ENCODE measurements at regions of chr2 and their contacts with region 1.

Region 1: DNA sequence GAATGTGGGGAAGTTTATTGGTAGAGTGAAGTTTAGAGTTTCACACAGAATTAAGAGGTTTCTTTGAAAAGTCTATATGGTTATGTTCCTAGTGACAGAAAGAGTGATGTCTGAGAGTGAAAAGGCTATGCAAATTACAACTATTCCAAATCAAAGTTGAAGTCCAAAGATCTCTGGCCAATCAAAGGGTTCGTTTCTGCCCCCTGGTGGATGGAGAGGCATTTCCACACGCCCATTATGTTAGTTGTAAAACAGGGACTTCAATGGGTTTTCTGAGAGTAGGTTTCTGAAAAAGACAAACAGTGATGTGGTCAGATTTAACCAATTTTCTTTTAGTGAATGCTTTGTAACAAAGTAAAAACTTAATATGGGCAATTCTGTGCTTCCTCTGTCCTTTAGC is 441.5 kb upstream of the POU3F3 start:
- DNase-seq: peak; percentile 35
- H3K4me3 Mint-ChIP-seq: no peak overlapping the region
- H3K27ac Mint-ChIP-seq: no peak overlapping the region
- H3K4me1 Mint-ChIP-seq: no peaks in the 10 kb centered on the region
- H3K27me3 Mint-ChIP-seq: peaks cover 16% of the 10 kb centered on the region
- CTCF ChIP-seq: no peak

Region 2: GRCh38 chr2:103161456-103162289 is 1250.7 kb before region 1 on chr2:
- CTCF ChIA-PET with region 1: no interaction called
- intact Hi-C with region 1: loop called (anchors 1 kb)
- DNase-seq: peak; percentile 52
- H3K4me3 Mint-ChIP-seq: no peak overlapping the region
- H3K27ac Mint-ChIP-seq: no peak overlapping the region
- H3K4me1 Mint-ChIP-seq: no peaks in the 10 kb centered on the region
- H3K27me3 Mint-ChIP-seq: no peaks in the 10 kb centered on the region
- CTCF ChIP-seq: peak; percentile 20

Region 3: DNA sequence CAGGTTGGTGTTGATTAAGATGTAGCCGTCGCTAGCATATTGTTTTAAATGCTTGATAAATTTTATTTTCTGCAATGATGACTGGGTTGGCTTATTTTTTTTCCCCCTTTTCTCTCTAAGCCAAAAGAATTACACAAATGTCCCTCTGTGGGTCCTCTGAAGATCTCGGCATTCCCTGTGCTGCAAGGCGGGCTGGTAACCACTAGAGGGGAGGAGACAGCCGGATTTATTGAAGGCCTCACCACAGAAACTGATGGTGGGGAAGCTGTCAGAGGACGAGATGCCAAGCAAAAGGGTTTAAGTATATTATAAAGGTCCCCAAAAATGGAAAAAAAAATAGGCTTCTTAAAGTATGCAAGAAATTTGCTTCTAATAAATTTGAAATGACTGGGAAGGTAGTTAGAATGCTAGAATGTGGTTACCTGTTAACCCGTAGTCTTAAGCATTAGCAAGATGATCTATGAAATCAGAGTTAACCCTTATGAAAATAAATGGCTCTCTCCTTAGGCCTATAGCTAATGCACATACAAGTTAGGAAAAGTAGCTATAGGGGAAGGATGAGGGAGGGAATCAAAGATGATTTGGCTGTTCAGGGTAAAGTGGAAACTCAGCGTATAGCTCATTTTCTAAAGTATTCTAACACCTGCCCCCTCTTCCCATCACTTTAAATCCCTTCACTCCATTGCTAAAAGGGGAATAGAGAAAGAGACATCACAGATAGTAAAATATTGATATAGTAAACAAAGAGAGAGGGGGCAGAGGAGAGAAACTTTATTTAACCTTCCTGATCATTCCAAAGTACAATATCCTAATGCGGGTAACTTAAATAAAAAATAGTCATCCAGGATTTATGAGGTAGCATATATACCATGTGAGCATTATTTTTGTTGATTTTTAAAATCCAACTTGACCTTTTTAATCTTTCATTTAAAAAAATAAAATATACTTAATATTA is 452.9 kb before region 1 on chr2:
- CTCF ChIA-PET with region 1: no interaction called
- intact Hi-C with region 1: loop called (anchors 5 kb)
- DNase-seq: peak; percentile 32
- H3K4me3 Mint-ChIP-seq: no peak overlapping the region
- H3K27ac Mint-ChIP-seq: no peak overlapping the region
- H3K4me1 Mint-ChIP-seq: no peaks in the 10 kb centered on the region
- H3K27me3 Mint-ChIP-seq: no peaks in the 10 kb centered on the region
- CTCF ChIP-seq: peak; percentile 32

Region 4: DNA sequence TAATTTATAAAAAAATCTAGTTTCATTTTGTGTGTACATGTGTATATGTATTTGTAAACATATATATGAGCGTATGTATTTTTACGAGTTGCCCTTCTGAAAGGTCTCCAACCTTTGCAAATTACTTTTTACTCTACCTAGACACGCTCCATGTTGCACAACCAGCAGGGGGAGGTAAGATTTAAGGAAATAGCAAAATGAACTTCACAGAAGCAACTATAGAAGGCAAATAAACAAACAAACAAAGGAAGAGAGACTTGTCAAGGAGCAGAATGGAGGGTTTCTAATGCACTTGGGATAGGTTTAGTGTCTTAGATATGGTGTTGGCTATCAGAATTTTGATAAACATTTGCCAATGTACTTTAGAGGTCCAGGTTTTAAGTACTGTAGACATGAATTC is 379.0 kb before region 1 on chr2:
- CTCF ChIA-PET with region 1: no interaction called
- intact Hi-C with region 1: loop called (anchors 10 kb)
- DNase-seq: no peak
- H3K4me3 Mint-ChIP-seq: no peak overlapping the region
- H3K27ac Mint-ChIP-seq: no peak overlapping the region
- H3K4me1 Mint-ChIP-seq: no peaks in the 10 kb centered on the region
- H3K27me3 Mint-ChIP-seq: no peaks in the 10 kb centered on the region
- CTCF ChIP-seq: no peak

Region 5: DNA sequence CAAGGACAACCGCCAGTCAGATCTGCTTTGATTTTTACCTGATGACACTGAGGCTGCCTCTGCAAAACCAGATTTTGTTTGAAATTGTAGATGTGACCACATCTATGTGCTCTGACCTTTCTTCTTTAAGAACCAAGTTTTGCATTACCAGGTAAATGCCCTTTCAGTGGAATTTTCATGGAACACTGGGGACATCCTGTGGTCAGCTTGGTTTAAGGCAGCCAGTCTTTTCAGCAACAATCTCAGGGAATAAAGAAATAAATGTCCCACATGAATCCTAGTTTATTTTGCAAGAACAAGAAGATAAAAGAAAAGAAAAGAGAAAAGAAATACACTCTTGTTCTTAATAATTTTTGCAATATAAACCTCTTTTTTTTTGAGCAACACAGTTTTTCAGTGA is 532.1 kb after region 1 on chr2:
- CTCF ChIA-PET with region 1: no interaction called
- intact Hi-C with region 1: loop called (anchors 10 kb)
- DNase-seq: peak; percentile 50
- H3K4me3 Mint-ChIP-seq: no peak overlapping the region
- H3K27ac Mint-ChIP-seq: no peak overlapping the region
- H3K4me1 Mint-ChIP-seq: peaks cover 10% of the 10 kb centered on the region
- H3K27me3 Mint-ChIP-seq: no peaks in the 10 kb centered on the region
- CTCF ChIP-seq: peak; percentile 38

Measured in Calu3 (cell line).